Transverse colon (tissue), 4 donors: ENCODE measurements at regions of chrX and their contacts with region 1.

Region 1: GRCh38 chrX:109485470-109486340 is 3.8 kb upstream of the GUCY2F start:
- DNase-seq: peak; percentile 63
- H3K4me3 ChIP-seq: no peak overlapping the region
- H3K27ac ChIP-seq: no peak overlapping the region
- H3K4me1 ChIP-seq: no peaks in the 10 kb centered on the region
- H3K27me3 ChIP-seq: no peaks in the 10 kb centered on the region
- CTCF ChIP-seq: peak; percentile 75 to 98 (median 84)
- EP300 ChIP-seq: no peak
- POLR2A ChIP-seq: no peak

Region 2: GRCh38 chrX:109155161-109155560 is 330.5 kb before region 1 on chrX:
- in situ Hi-C with region 1: no loop called
- intact Hi-C with region 1: no loop called
- DNase-seq: no peak
- H3K4me3 ChIP-seq: no peak overlapping the region
- H3K27ac ChIP-seq: no peak overlapping the region
- H3K4me1 ChIP-seq: no peaks in the 10 kb centered on the region
- H3K27me3 ChIP-seq: no peaks in the 10 kb centered on the region
- CTCF ChIP-seq: no peak
- EP300 ChIP-seq: no peak
- POLR2A ChIP-seq: no peak

Region 3: DNA sequence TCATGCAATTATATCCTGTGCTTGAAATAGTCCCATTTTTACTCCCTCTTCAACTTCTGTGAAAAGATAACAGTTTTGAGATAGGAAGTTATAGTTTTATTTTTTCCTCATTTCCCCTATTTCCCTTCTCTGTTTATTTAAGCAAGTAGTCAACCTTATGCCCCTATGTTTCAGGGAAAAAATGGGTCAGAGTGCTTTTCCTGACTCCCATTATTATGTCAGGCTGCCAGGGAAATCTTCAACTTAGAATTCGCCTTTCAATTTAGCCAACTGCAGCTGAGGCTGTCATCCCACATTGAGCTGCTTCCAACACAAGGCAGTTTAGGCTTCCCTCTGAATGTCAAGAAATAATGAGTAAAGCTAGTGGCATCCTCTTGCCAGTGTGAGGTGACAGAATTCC is 93.2 kb after region 1 on chrX:
- in situ Hi-C with region 1: no loop called
- intact Hi-C with region 1: no loop called
- DNase-seq: no peak
- H3K4me3 ChIP-seq: no peak overlapping the region
- H3K27ac ChIP-seq: no peak overlapping the region
- H3K4me1 ChIP-seq: no peaks in the 10 kb centered on the region
- H3K27me3 ChIP-seq: no peaks in the 10 kb centered on the region
- CTCF ChIP-seq: no peak
- EP300 ChIP-seq: no peak
- POLR2A ChIP-seq: no peak

Region 4: DNA sequence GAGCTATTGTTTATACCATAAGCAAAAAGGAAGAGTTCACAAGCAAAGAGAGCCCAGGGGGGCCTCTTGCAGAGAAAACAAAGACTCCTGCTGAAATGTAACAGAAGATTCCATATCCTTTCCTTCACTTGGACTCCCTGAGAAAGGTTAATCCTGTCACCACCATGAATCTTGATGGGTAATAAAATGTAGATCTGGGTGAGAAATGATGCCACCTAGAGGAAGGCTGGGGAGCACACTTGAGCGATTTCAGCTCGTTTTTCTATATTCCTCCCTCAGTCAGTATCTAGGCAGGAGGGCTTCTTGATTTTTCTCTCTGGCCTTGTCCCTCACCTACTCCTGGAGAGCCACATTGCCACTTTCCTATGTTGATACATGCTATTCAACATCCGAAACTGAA is 149.5 kb after region 1 on chrX:
- in situ Hi-C with region 1: loop called in 3 of 4 experiments (anchors 10 kb)
- intact Hi-C with region 1: no loop called
- DNase-seq: no peak
- H3K4me3 ChIP-seq: no peak overlapping the region
- H3K27ac ChIP-seq: no peak overlapping the region
- H3K4me1 ChIP-seq: no peaks in the 10 kb centered on the region
- H3K27me3 ChIP-seq: no peaks in the 10 kb centered on the region
- CTCF ChIP-seq: peak; percentile 25 to 31 (median 30)
- EP300 ChIP-seq: no peak
- POLR2A ChIP-seq: no peak

Region 5: DNA sequence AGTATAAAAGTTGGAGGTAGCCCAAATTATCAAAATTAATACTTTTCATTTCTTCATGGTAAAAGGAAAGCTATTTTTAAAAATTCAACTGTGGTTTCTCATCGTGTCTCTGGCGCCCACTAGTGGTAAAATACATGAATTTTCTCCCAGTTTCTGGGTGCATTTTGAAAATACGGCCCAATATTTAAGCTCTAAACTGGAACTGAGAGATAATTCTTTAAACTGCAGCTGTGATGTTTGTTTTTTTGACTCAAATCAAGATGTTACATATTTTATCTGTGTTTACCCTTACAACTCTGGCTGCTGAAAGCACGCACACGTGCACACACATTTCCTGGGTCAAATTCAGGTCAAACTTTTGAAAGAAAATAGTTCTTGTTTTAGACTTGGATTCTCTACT is 371.3 kb after region 1 on chrX:
- in situ Hi-C with region 1: loop called in 1 of 4 experiments (anchors 25 kb)
- intact Hi-C with region 1: no loop called
- DNase-seq: no peak
- H3K4me3 ChIP-seq: no peak overlapping the region
- H3K27ac ChIP-seq: no peak overlapping the region
- H3K4me1 ChIP-seq: no peaks in the 10 kb centered on the region
- H3K27me3 ChIP-seq: no peaks in the 10 kb centered on the region
- CTCF ChIP-seq: peak; percentile 55 to 86 (median 70)
- EP300 ChIP-seq: no peak
- POLR2A ChIP-seq: no peak

Region 6: GRCh38 chrX:109890895-109891502 is 405.3 kb after region 1 on chrX:
- in situ Hi-C with region 1: loop called in 1 of 4 experiments (anchors 25 kb)
- intact Hi-C with region 1: no loop called
- DNase-seq: peak; percentile 49
- H3K4me3 ChIP-seq: no peak overlapping the region
- H3K27ac ChIP-seq: no peak overlapping the region
- H3K4me1 ChIP-seq: no peaks in the 10 kb centered on the region
- H3K27me3 ChIP-seq: no peaks in the 10 kb centered on the region
- CTCF ChIP-seq: peak; percentile 50 to 87 (median 61)
- EP300 ChIP-seq: no peak
- POLR2A ChIP-seq: no peak

Region 7: DNA sequence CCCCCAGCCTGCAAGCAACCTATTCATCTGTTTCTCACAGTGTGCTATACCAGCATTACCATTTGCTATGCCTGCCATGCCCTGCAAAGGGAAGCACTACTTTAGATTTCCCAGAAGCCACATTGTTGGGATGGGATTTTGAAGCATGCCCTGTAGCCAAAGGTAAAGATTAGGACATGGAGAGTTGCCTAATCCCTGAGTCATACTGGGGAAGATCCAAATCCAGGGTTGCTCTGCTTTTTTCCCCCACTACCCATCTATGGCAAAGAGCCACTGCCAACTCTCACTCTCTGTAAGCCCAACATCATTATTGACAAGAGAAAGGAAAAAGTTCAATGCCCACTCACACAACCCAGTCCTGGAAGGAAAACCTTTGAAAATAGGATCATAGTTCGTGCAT is 480.5 kb after region 1 on chrX:
- in situ Hi-C with region 1: no loop called
- intact Hi-C with region 1: no loop called
- DNase-seq: no peak
- H3K4me3 ChIP-seq: no peak overlapping the region
- H3K27ac ChIP-seq: no peak overlapping the region
- H3K4me1 ChIP-seq: no peaks in the 10 kb centered on the region
- H3K27me3 ChIP-seq: no peaks in the 10 kb centered on the region
- CTCF ChIP-seq: no peak
- EP300 ChIP-seq: no peak
- POLR2A ChIP-seq: no peak

Region 8: DNA sequence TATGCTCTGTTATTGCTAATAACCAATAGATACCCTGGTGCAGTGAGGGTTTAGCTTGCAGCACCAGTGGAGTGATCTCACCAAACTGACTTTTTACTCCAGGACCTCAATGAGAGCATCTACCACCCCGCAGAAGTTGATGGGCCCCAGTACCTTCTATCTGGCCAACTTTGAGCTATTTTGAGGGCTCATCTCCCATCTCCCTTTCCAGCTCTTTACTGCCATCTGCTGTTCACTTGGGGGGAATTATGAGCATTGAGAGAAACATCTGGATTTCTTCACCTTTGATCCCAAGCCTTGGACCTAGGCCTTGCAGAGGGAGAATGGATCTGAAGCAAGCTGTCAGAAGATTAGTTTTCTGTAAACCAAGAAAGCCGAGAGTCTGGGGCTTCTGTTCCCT is 660.8 kb after region 1 on chrX:
- in situ Hi-C with region 1: loop called in 1 of 4 experiments (anchors 25 kb)
- intact Hi-C with region 1: no loop called
- DNase-seq: peak; percentile 35
- H3K4me3 ChIP-seq: no peak overlapping the region
- H3K27ac ChIP-seq: no peak overlapping the region
- H3K4me1 ChIP-seq: peaks cover 0 to 10% (median 0%) of the 10 kb centered on the region in 4 donors
- H3K27me3 ChIP-seq: no peaks in the 10 kb centered on the region
- CTCF ChIP-seq: peak; percentile 43 to 51 (median 48)
- EP300 ChIP-seq: no peak
- POLR2A ChIP-seq: no peak